MCF 10A (cell line): ENCODE measurements at regions of chr15 and their contacts with region 1.

Region 1: GRCh38 chr15:35289024-35289617 is 204.0 kb upstream of the NANOGP8 start:
- DNase-seq: peak; percentile 61
- H3K4me3 Mint-ChIP-seq: no peak overlapping the region
- H3K27ac Mint-ChIP-seq: no peak overlapping the region
- H3K4me1 Mint-ChIP-seq: peaks cover 11% of the 10 kb centered on the region
- H3K27me3 Mint-ChIP-seq: no peaks in the 10 kb centered on the region
- CTCF ChIP-seq: peak; percentile 64

Region 2: GRCh38 chr15:33946152-33946551 is 1343.0 kb before region 1 on chr15:
- CTCF ChIA-PET with region 1: no interaction called
- POLR2A ChIA-PET with region 1: no interaction called
- intact Hi-C with region 1: no loop called
- DNase-seq: no peak
- H3K4me3 Mint-ChIP-seq: no peak overlapping the region
- H3K27ac Mint-ChIP-seq: no peak overlapping the region
- H3K4me1 Mint-ChIP-seq: no peaks in the 10 kb centered on the region
- H3K27me3 Mint-ChIP-seq: no peaks in the 10 kb centered on the region
- CTCF ChIP-seq: no peak

Region 3: DNA sequence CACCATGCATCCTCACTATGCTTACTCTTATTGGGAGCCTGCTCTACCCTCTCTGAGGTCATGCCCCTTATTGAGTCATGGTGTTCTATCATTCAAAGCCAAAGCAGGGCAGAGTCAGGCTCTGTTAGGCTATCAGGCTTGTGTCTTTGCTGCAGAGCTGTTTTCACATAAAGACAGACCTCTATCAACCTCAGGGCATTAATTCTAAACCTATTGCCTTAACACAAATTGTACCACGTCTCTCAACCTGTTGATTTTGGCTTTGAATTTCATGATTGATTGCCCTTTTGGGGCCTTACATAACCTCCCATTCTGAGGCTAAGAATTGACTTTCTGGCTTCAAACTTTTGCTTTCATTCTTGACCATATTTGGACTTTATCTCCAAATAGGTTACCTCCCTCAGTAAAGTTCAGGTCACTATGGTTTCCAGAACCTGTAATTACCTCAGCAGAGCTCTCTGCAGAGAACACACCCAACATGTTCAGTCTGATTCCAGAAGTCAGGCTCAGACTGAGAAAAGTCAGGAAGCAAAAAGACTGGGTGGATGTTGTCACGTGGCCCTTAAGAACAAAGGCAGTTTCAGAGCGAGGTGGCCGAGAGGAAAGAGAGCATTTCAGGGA is 17.4 kb after region 1 on chr15:
- CTCF ChIA-PET with region 1: interaction called, 12 read pairs
- POLR2A ChIA-PET with region 1: interaction called, 4 read pairs
- intact Hi-C with region 1: no loop called
- DNase-seq: peak; percentile 53
- H3K4me3 Mint-ChIP-seq: peak overlapping the region; percentile 54
- H3K27ac Mint-ChIP-seq: peak overlapping the region; percentile 96
- H3K4me1 Mint-ChIP-seq: peaks cover 32% of the 10 kb centered on the region
- H3K27me3 Mint-ChIP-seq: no peaks in the 10 kb centered on the region
- CTCF ChIP-seq: no peak

Region 4: DNA sequence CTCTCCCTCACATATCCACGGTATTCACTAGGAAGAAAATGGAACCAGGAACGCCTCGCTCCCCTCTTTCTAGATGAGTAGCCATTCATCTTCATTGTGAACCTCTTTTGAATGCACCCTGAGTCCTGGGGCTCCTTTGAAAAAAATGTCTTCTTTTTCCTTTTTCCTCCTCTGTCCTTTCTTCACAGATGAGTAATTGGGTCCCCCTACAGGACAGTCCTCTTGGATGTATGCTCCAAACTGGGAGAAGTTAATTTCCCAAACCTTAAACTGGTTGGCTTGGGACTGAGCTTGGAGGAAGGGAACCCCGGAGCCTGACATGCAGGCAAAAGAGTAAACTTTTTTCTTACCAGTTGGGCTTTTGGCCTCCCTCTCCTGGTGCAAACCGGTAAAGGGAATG is 148.0 kb after region 1 on chr15:
- CTCF ChIA-PET with region 1: interaction called, 240 read pairs
- POLR2A ChIA-PET with region 1: no interaction called
- intact Hi-C with region 1: no loop called
- DNase-seq: peak; percentile 6
- H3K4me3 Mint-ChIP-seq: no peak overlapping the region
- H3K27ac Mint-ChIP-seq: no peak overlapping the region
- H3K4me1 Mint-ChIP-seq: no peaks in the 10 kb centered on the region
- H3K27me3 Mint-ChIP-seq: no peaks in the 10 kb centered on the region
- CTCF ChIP-seq: no peak

Region 5: DNA sequence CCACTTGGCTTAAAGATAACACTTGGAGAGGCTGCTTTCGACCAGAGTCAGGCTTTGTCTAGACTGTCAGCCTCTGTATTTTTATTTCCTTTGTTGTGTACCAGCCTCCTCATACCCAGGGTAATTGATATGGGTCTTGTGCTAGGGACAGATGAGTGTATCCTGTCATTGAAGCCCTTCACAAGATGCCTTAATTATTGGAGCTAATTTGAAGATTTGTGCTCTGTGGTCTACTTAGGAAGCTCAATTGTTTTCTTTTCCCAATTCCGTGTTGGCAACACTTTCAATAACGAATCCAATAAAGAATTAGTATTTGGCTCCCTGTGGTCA is 317.3 kb after region 1 on chr15:
- CTCF ChIA-PET with region 1: no interaction called
- POLR2A ChIA-PET with region 1: no interaction called
- intact Hi-C with region 1: no loop called
- DNase-seq: no peak
- H3K4me3 Mint-ChIP-seq: no peak overlapping the region
- H3K27ac Mint-ChIP-seq: no peak overlapping the region
- H3K4me1 Mint-ChIP-seq: peaks cover 13% of the 10 kb centered on the region
- H3K27me3 Mint-ChIP-seq: no peaks in the 10 kb centered on the region
- CTCF ChIP-seq: no peak

Region 6: DNA sequence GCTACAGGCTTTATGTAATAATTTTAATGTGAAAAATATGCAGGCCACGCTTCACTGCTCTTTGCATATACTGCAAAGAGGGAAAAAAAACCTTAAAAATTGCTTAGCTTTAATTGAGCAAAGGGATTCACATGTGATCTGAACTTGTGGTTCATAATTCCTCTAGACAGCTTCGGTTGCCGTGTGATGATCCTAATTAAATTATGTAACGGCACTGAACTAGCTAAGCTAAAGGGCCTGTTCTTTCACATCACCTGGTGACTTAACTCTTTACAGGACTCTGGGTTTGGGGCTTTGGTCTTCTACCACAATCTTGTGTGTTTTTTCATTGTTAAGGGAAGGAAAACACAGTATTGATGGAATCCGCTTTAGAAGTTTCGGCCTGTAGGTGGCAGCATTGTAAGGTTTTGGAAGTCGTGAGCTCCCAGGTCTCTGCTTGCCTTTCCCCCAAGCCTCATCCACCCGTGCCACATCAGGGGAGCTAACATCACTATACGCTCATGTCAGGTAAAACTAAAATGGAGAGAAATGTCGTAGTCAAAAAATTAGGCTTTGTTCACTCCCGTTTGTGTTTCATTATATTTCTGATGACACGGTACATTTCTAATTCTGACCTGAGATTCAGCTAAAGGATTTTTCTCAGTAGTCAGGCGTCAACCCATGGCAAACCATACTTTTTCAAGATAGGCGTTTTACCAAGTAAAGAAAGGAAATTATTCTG is 462.5 kb after region 1 on chr15:
- CTCF ChIA-PET with region 1: interaction called, 11 read pairs
- POLR2A ChIA-PET with region 1: no interaction called
- intact Hi-C with region 1: loop called (anchors 5 kb)
- DNase-seq: peak; percentile 80
- H3K4me3 Mint-ChIP-seq: no peak overlapping the region
- H3K27ac Mint-ChIP-seq: no peak overlapping the region
- H3K4me1 Mint-ChIP-seq: no peaks in the 10 kb centered on the region
- H3K27me3 Mint-ChIP-seq: no peaks in the 10 kb centered on the region
- CTCF ChIP-seq: peak; percentile 68

Region 7: DNA sequence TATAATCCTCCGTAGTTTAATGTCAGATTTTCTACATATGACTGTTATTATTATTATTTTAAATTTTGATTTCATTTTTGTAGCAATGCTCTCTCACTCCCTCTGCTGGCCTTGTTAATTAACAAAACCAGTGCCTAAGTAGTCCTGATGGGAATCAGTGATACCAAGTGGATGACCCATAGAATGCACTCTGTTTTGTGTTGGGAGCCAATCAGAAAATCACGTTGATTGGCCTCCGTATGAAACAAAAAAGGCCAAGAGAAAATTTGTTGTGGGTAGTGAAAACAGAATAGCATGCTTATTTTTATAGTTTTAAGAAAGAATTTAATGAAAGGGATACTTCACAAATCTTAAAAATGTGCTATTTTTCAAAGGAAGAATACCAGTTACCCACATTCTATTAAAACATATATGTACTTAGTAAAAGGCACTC is 1845.6 kb after region 1 on chr15:
- CTCF ChIA-PET with region 1: no interaction called
- POLR2A ChIA-PET with region 1: no interaction called
- intact Hi-C with region 1: loop called (anchors 10 kb)
- DNase-seq: peak; percentile 64
- H3K4me3 Mint-ChIP-seq: no peak overlapping the region
- H3K27ac Mint-ChIP-seq: no peak overlapping the region
- H3K4me1 Mint-ChIP-seq: peaks cover 9% of the 10 kb centered on the region
- H3K27me3 Mint-ChIP-seq: peaks cover 47% of the 10 kb centered on the region
- CTCF ChIP-seq: no peak